Heart left ventricle (tissue), 16 donors: ENCODE measurements at regions of chr3 and their contacts with region 1.

Region 1: DNA sequence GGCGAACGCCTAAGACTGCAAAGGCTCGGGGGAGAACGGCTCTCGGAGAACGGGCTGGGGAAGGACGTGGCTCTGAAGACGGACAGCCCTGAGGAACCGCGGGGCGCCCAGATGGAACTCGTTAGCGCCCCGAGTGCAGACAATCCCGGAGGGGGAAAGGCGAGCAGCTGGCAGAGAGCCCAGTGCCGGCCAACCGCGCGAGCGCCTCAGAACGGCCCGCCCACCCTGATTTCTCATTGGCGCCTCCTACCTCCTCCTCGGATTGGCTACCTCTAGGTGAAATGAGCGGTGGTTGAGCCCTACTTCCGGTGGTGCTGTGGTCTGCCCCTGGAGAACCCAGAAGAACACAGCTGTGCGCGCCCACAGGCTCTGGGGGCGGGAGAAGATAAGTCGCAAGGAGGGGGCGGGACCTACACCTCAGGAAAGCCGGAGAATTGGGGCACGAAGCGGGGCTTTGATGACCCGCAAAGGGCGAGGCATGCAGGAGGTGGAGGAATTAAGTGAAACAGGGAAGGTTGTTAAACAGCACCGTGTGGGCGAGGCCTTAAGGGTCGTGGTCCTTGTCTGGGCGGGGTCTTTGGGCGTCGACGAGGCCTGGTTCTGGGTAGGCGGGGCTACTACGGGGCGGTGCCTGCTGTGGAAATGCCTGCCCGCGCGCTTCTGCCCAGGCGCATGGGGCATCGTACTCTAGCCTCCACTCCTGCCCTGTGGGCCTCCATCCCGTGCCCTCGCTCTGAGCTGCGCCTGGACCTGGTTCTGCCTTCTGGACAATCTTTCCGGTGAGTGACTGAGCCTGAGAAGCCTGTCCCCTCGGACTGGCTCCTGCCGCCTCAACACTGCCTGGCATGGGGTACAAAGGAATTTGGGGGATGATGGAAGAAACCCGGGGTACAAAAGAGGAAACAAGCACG is at the start of gene OGG1:
- DNase-seq: peak; percentile 98 to 99 (median 99)
- ATAC-seq: peak; percentile 98
- H3K4me3 ChIP-seq: peak within 1 kb of the TSS; percentile 33 to 81 (median 65)
- H3K27ac ChIP-seq: peak within 1 kb of the TSS; percentile 71 to 97 (median 90)
- H3K4me1 ChIP-seq: peaks cover 4 to 37% (median 23%) of the 10 kb centered on the region in 12 donors
- H3K27me3 ChIP-seq: no peaks in the 10 kb centered on the region
- CTCF ChIP-seq: peak in 5 of 12 donors; percentile 18 to 44 (median 22)
- POLR2A ChIP-seq: peak in 1 of 2 donors; percentile 72
- total RNA-seq, gene OGG1: 6.2 to 14.8 (median 8.3) TPM

Region 2: DNA sequence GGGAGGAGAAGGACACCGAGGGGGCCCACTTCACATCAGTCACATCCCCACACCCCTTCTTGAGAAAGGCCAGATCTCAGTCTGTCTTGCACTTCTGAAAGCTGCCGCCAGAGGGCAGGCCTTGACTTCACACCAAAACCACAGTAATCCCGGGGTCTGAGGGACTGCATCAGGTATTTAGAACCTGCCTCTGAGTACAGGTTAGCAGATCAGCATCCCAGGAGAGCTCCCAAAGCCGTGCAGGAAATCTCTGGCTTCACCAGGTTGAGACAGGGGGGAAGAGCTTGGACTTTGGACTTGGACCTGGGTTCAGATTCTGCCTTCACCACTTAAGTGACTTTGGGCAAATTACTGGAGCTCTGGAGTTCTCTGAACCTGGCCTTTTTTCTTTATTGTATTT is 246.6 kb before region 1 on chr3:
- intact Hi-C with region 1: loop called in 1 of 10 experiments (anchors 10 kb)
- DNase-seq: peak; percentile 27 to 77 (median 46)
- ATAC-seq: peak in 2 of 4 donors; percentile 35 to 48
- H3K4me3 ChIP-seq: no peak overlapping the region
- H3K27ac ChIP-seq: no peak overlapping the region
- H3K4me1 ChIP-seq: peaks cover 0 to 13% (median 7%) of the 10 kb centered on the region in 12 donors
- H3K27me3 ChIP-seq: peaks cover 0 to 37% (median 15%) of the 10 kb centered on the region in 9 donors
- CTCF ChIP-seq: peak; percentile 80 to 89 (median 86)
- POLR2A ChIP-seq: no peak

Region 3: DNA sequence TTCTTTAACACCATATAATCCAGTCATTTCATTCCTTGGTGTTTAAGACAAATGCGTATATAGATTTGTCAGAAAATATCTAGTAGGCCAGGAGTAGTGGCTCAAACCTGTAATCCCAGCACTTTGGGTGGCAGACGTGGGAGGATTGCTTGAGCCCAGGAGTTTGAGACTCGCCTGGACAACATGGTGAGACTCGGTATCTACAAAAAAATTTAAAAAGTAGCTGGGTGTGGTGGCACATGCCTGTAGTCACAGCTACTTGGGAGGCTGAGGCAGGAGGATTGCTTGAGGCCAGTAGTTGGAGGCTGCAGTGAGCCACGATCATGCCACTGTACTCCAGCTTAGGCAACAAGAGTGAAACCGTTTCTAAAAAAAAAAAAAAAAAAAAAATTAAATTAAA is 102.5 kb before region 1 on chr3:
- intact Hi-C with region 1: no loop called
- DNase-seq: no peak
- ATAC-seq: no peak
- H3K4me3 ChIP-seq: no peak overlapping the region
- H3K27ac ChIP-seq: no peak overlapping the region
- H3K4me1 ChIP-seq: peaks cover 0 to 25% (median 19%) of the 10 kb centered on the region in 12 donors
- H3K27me3 ChIP-seq: no peaks in the 10 kb centered on the region
- CTCF ChIP-seq: no peak
- POLR2A ChIP-seq: no peak

Region 4: DNA sequence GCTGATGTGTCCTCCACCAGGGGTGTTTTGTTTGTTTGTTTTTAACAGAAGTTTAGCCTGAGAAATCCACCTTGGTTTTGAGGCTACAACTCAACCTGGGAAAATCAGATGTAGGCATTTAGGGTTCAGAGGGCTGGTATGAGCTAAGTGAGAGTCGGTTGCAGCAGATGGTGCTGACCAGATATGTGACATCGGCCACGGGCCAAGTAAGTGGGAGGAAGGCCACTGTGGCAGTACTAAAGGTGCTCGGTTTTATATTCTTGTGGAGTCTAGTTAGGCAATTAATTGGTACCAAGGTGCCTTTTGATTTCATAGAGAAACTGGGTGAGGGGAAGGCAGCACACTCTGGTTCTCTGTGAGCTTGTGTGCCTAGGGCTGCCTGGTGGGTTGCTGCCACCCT is 90.1 kb before region 1 on chr3:
- intact Hi-C with region 1: loop called in 1 of 10 experiments (anchors 5 kb)
- DNase-seq: no peak
- ATAC-seq: peak in 1 of 4 donors; percentile 28
- H3K4me3 ChIP-seq: no peak overlapping the region
- H3K27ac ChIP-seq: peak overlapping the region in 1 of 12 donors; percentile 9
- H3K4me1 ChIP-seq: peaks cover 0 to 21% (median 6%) of the 10 kb centered on the region in 12 donors
- H3K27me3 ChIP-seq: no peaks in the 10 kb centered on the region
- CTCF ChIP-seq: no peak
- POLR2A ChIP-seq: no peak

Region 5: GRCh38 chr3:9731206-9732079 is 18.5 kb before region 1 on chr3 and contains the start of gene BRPF1:
- intact Hi-C with region 1: loop called in 5 of 10 experiments (anchors 1 to 2 kb)
- DNase-seq: peak; percentile 99 to 100 (median 100)
- ATAC-seq: peak; percentile 99 to 100 (median 99)
- H3K4me3 ChIP-seq: peak within 1 kb of the TSS; percentile 82 to 100 (median 98)
- H3K27ac ChIP-seq: peak within 1 kb of the TSS; percentile 91 to 100 (median 97)
- H3K4me1 ChIP-seq: peaks cover 9 to 52% (median 24%) of the 10 kb centered on the region in 12 donors
- H3K27me3 ChIP-seq: no peaks in the 10 kb centered on the region
- CTCF ChIP-seq: peak in 5 of 12 donors; percentile 8 to 28 (median 21)
- POLR2A ChIP-seq: peak in 1 of 2 donors; percentile 61
- total RNA-seq, gene BRPF1: 9.0 to 17.8 (median 10.6) TPM

Region 6: GRCh38 chr3:9769426-9770275 is 19.8 kb after region 1 on chr3 and contains the start of gene CAMK1:
- intact Hi-C with region 1: loop called in 1 of 10 experiments (anchors 1 kb)
- DNase-seq: peak; percentile 85 to 93 (median 88)
- ATAC-seq: peak; percentile 78 to 96 (median 92)
- H3K4me3 ChIP-seq: peak within 1 kb of the TSS; percentile 58 to 96 (median 78)
- H3K27ac ChIP-seq: peak within 1 kb of the TSS; percentile 51 to 90 (median 84)
- H3K4me1 ChIP-seq: peaks cover 0 to 46% (median 31%) of the 10 kb centered on the region in 12 donors
- H3K27me3 ChIP-seq: no peaks in the 10 kb centered on the region
- CTCF ChIP-seq: no peak
- POLR2A ChIP-seq: peak in 1 of 2 donors; percentile 86
- total RNA-seq, gene CAMK1: 9.7 to 26.3 (median 14.7) TPM

Region 7: GRCh38 chr3:9786825-9787669 is 37.1 kb after region 1 on chr3:
- intact Hi-C with region 1: loop called in 5 of 10 experiments (anchors 1 to 5 kb)
- DNase-seq: no peak
- ATAC-seq: no peak
- H3K4me3 ChIP-seq: no peak overlapping the region
- H3K27ac ChIP-seq: no peak overlapping the region
- H3K4me1 ChIP-seq: peaks cover 0 to 24% (median 8%) of the 10 kb centered on the region in 12 donors
- H3K27me3 ChIP-seq: no peaks in the 10 kb centered on the region
- CTCF ChIP-seq: peak in 5 of 12 donors; percentile 19 to 34 (median 28)
- POLR2A ChIP-seq: no peak

Region 8: GRCh38 chr3:9792405-9793160 is 42.7 kb after region 1 on chr3 and contains the starts of genes ARPC4 and TADA3:
- intact Hi-C with region 1: loop called in 5 of 10 experiments (anchors 1 to 5 kb)
- DNase-seq: peak; percentile 95 to 97 (median 96)
- ATAC-seq: peak; percentile 94 to 96 (median 94)
- H3K4me3 ChIP-seq: peak within 1 kb of the TSS; percentile 66 to 100 (median 92)
- H3K27ac ChIP-seq: peak within 1 kb of the TSS; percentile 89 to 99 (median 97)
- H3K4me1 ChIP-seq: peaks cover 0 to 57% (median 24%) of the 10 kb centered on the region in 12 donors
- H3K27me3 ChIP-seq: no peaks in the 10 kb centered on the region
- CTCF ChIP-seq: peak in 2 of 12 donors; percentile 18 to 19
- POLR2A ChIP-seq: peak in 1 of 2 donors; percentile 66
- total RNA-seq, gene ARPC4: 48.8 to 147 (median 79.7) TPM
- total RNA-seq, gene TADA3: 32.8 to 61.5 (median 45.9) TPM